Activated B cell treated with CpG ODN at 0.5 μM for 24 hours (primary cell): ENCODE measurements at regions of chr11 and their contacts with region 1.

Region 1: GRCh38 chr11:77473801-77474683 is at the start of gene PAK1:
- DNase-seq: peak; percentile 81
- ATAC-seq: peak; percentile 79
- H3K4me3 Mint-ChIP-seq: peak within 1 kb of the TSS; percentile 88
- H3K27ac Mint-ChIP-seq: peak within 1 kb of the TSS; percentile 89
- H3K4me1 Mint-ChIP-seq: peaks cover 18% of the 10 kb centered on the region
- H3K27me3 Mint-ChIP-seq: peaks cover 6% of the 10 kb centered on the region
- CTCF ChIP-seq: no peak
- total RNA-seq, gene PAK1: 20.2 and 21.1 TPM in 2 replicates

Region 2: DNA sequence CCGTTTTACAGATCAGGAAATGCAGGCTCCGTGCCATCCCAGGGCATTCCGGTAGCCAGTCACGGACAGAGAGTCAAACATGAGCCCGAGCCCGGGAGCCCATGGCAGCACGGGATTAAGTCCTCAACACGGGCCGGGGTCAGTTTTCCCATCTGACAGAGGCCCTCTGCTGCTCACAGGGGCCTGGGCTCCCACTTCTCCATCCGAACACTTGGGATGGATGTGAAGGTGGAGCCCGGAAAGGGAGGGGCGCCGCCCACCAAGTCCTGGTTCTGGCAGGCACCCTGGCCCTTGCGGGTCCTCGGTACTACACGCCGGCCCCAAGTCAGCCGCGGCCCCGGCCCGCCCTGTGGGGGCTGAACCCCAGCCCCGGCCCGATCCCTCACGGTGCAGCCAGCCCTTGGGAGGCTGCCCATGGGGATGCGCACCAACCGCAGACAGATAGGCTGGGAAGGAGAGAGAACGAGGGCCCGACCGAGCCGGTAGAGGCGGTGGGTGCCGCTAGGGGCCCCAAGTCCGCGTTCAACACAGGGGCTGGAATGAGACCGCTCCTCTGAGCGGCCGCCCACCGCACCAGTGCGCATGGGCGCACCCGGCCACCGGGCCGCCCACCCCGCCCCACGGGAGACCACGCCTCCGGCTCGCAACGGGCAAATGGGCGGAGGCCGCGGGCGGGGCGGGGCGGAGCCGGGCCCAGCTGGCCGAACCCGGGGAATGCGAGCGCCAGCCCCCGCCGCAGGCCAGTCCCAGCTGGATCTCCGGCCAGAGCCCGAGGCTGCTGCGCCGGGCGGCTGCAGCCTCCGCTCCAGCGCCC is 407.6 kb before region 1 on chr11 and contains the start of gene CAPN5:
- CTCF ChIA-PET with region 1: no interaction called
- POLR2A ChIA-PET with region 1: no interaction called
- intact Hi-C with region 1: loop called (anchors 10 kb)
- DNase-seq: peak; percentile 93
- ATAC-seq: peak; percentile 95
- H3K4me3 Mint-ChIP-seq: peak within 1 kb of the TSS; percentile 85
- H3K27ac Mint-ChIP-seq: peak within 1 kb of the TSS; percentile 54
- H3K4me1 Mint-ChIP-seq: peaks cover 10% of the 10 kb centered on the region
- H3K27me3 Mint-ChIP-seq: no peaks in the 10 kb centered on the region
- CTCF ChIP-seq: no peak
- total RNA-seq, gene CAPN5: 0.44 and 0.71 TPM in 2 replicates

Region 3: DNA sequence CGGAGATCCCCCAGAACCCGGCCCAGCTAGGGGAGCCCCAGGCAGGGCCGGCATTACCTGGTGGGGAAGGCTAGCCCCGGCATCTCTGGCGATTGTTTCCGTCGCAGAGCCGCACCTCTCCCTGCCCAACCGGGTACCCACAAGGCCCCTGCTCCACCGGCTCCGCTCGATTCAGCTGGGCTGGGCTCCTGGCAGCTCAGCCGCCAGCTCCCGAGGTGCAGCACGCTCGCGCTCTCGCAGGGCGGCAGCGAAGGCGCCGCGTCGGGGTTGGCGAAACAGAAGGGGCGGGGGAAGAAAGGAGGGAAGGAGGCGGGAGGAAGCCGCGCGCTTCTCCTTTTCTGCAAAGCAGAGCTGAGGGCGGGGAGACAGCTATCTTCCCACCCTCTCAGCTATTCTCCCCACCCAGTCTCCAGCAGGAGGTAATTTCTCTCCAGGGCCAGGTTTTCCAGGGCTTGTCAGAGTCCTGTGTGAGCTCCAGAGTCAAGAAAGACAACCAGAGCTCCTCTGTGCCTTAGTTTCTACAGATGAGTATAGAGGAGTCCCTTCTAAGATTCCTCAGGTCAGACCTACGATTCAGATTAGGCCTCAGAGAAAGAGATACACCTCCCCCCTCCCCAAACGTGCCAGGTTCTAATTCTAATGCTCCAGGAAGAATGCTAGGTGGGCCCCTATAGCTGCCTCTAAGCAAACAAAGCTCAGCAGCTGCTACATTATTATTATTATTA is 62.2 kb before region 1 on chr11:
- CTCF ChIA-PET with region 1: no interaction called
- POLR2A ChIA-PET with region 1: interaction called, 4 read pairs
- intact Hi-C with region 1: loop called (anchors 1 kb)
- DNase-seq: peak; percentile 70
- ATAC-seq: peak; percentile 96
- H3K4me3 Mint-ChIP-seq: peak overlapping the region; percentile 94
- H3K27ac Mint-ChIP-seq: peak overlapping the region; percentile 85
- H3K4me1 Mint-ChIP-seq: peaks cover 23% of the 10 kb centered on the region
- H3K27me3 Mint-ChIP-seq: no peaks in the 10 kb centered on the region
- CTCF ChIP-seq: no peak

Region 4: DNA sequence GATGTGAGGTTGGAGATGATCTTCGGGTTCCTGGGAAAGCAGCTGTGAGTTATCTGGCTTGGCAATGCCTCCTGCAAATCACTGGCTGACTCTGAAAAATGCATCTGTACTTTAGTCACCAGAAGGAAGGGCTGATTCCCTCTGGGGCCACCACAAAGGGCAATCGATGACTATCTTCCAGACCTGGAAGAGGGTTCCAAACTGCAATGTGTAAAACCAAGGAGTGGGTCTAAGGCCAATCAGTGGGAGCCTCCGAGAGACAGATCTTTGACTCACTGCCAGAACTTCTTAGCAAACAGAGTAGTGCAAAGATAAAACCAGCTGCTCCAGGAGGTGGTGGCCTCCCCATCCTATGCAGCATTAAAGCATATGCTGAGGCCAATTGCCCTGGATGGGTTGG is 29.0 kb after region 1 on chr11:
- CTCF ChIA-PET with region 1: no interaction called
- POLR2A ChIA-PET with region 1: no interaction called
- intact Hi-C with region 1: no loop called
- DNase-seq: no peak
- ATAC-seq: no peak
- H3K4me3 Mint-ChIP-seq: no peak overlapping the region
- H3K27ac Mint-ChIP-seq: no peak overlapping the region
- H3K4me1 Mint-ChIP-seq: peaks cover 9% of the 10 kb centered on the region
- H3K27me3 Mint-ChIP-seq: peaks cover 19% of the 10 kb centered on the region
- CTCF ChIP-seq: no peak

Region 5: DNA sequence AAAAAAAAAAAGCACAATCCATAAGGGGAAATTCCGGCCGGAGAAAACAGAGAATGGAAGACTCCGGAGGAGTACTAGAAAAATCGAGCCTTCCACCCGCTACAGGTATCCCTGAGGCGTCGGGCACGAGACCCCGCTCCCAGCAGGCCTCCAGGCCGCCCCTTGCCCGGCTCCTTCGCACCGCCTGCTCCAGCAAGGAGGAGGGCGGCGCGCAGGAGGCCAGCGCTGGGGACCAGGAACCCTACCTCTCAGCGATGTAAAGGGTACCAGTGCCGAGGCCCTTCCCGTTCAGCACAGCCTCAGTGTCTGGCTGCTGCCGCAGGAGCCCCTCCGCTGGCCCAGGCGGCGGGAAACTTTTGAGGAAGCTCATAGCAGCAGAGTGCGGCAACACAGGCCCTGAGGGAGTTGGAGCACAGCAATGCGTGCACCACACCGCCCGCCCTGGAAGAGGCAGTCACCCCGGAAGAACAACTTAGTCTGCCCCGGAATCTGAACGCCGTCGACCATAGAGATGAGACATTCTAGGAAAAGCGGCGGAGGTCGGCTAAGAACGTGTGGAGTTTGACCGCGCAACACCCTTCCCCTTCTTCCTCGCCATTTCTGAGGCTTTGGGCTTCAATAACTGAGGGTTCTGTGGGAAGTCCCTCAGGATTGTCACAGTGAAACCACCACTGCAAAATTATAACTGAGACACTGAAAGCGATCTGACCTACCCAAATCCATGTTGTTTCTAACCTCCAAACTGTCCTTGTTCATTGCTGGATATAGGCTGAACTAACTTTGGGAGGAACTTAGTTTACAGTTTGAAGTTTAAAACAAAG is 163.5 kb after region 1 on chr11 and contains the start of gene CLNS1A:
- CTCF ChIA-PET with region 1: no interaction called
- POLR2A ChIA-PET with region 1: interaction called, 6 read pairs
- intact Hi-C with region 1: loop called (anchors 5 kb)
- DNase-seq: peak; percentile 70
- ATAC-seq: peak; percentile 99
- H3K4me3 Mint-ChIP-seq: peak within 1 kb of the TSS; percentile 96
- H3K27ac Mint-ChIP-seq: peak within 1 kb of the TSS; percentile 94
- H3K4me1 Mint-ChIP-seq: peaks cover 41% of the 10 kb centered on the region
- H3K27me3 Mint-ChIP-seq: no peaks in the 10 kb centered on the region
- CTCF ChIP-seq: no peak
- total RNA-seq, gene CLNS1A: 112 and 116 TPM in 2 replicates

Region 6: DNA sequence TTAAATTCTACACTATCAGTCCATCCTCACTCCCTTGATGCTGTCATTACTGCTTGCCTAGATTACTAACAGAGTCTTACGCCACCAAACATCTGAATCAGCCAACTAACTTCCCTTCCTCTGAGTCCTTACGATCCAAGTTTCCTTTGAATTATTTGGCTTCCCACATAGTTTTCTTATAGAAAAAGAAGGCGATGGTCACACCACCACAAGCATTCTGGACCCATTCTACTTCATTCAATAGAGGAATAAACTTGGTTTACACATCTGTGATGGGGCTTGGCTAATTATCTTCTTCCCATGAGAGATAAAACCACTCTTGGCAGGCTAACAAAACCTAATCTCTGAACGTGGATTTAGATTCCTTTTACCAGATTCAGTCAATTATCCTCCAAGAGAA is 485.4 kb after region 1 on chr11:
- CTCF ChIA-PET with region 1: no interaction called
- POLR2A ChIA-PET with region 1: no interaction called
- intact Hi-C with region 1: no loop called
- DNase-seq: no peak
- ATAC-seq: no peak
- H3K4me3 Mint-ChIP-seq: no peak overlapping the region
- H3K27ac Mint-ChIP-seq: no peak overlapping the region
- H3K4me1 Mint-ChIP-seq: no peaks in the 10 kb centered on the region
- H3K27me3 Mint-ChIP-seq: no peaks in the 10 kb centered on the region
- CTCF ChIP-seq: no peak